WTC11 (cell line): ENCODE measurements at regions of chr1 and their contacts with region 1.

Region 1: GRCh38 chr1:205061665-205062069 is 18.7 kb downstream of the CNTN2 start:
- DNase-seq: peak; percentile 96
- ATAC-seq: peak; percentile 85
- H3K4me3 Mint-ChIP-seq: no peak overlapping the region
- H3K27ac Mint-ChIP-seq: no peak overlapping the region
- H3K4me1 Mint-ChIP-seq: peaks cover 9% of the 10 kb centered on the region; the same call in 1 of the 2 replicates
- H3K27me3 Mint-ChIP-seq: no peaks in the 10 kb centered on the region
- CTCF ChIP-seq: peak; percentile 84

Region 2: GRCh38 chr1:204692325-204692840 is 369.3 kb before region 1 on chr1:
- CTCF ChIA-PET with region 1: no interaction called
- POLR2A ChIA-PET with region 1: no interaction called
- DNase-seq: no peak
- ATAC-seq: peak; percentile 66
- H3K4me3 Mint-ChIP-seq: peak overlapping the region; percentile 28
- H3K27ac Mint-ChIP-seq: no peak overlapping the region
- H3K4me1 Mint-ChIP-seq: peaks cover 28% of the 10 kb centered on the region
- H3K27me3 Mint-ChIP-seq: peaks cover 56% of the 10 kb centered on the region
- CTCF ChIP-seq: no peak

Region 3: DNA sequence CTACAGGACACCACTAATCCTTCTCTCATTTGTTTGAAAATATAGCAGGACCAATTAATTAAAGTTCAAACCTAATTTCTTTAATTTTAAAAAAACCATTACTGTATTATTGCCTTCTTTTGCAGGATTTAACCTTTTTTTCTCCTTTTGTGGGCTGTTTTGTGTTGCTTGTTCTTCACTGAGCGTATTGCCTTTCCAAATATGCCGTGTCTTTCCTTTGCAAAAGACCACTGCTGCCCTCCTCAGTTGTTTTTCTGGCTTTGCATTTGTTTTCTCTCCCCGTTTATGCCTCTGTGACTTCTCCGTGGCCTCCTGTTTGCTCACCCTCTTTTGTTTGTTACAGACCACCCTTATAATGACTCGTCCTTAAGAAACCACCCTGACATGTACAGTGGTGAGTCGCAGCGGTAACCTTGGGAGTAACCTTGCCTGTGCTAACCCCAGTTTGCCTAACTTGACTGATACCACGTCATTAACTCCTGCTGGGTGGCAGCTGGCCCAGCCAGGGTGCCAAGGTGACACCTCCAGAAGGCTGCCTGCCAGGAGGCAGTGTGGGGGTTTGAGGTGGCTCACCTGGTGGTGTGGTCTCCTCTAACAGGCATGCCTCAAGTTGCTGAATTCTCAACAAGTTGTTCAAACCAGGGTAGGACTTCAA is 99.8 kb before region 1 on chr1:
- CTCF ChIA-PET with region 1: interaction called, 28 read pairs
- POLR2A ChIA-PET with region 1: no interaction called
- DNase-seq: no peak
- ATAC-seq: no peak; the same call in 1 of the 2 replicates
- H3K4me3 Mint-ChIP-seq: no peak overlapping the region
- H3K27ac Mint-ChIP-seq: no peak overlapping the region
- H3K4me1 Mint-ChIP-seq: peaks cover 9% of the 10 kb centered on the region
- H3K27me3 Mint-ChIP-seq: no peaks in the 10 kb centered on the region
- CTCF ChIP-seq: no peak

Region 4: DNA sequence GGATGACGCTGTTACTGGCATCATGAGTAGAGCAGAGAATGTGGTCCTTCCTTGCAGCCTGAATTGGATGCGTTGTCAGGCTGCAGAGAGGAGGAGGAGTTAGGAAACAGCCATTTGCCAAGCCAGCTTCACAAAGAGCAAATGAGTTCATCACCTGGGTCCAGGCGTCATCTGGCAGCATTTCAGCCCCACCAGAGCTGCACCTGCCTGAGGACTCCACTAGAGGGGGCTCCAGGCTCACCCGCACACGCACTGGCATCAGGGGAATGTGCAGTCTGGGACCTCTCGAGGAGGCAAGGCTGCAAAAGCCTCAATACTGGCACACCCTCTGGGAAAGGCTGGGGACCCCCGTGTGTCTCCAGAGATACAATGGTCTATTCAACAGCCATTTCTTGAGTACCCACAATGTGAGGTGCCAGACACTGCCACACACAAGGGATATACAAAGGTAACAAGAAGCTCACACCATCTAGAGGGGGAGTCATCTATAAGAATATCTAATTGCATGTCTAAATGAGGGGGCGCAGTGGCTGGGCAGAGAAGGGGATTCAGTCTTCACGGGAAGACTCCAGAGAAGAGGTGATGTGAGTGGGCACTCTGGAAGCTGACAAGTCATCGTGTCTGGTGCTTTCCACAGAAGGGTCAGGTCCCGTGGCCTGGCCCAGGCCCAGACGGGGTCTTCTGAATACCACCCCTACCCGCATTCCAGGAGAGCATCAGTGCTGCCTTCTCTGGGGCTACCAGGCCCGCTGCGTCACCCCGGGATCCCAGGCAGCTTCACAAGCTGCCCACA is 72.2 kb before region 1 on chr1:
- CTCF ChIA-PET with region 1: interaction called, 648 read pairs
- POLR2A ChIA-PET with region 1: interaction called, 8 read pairs
- DNase-seq: peak; percentile 85
- ATAC-seq: peak; percentile 87
- H3K4me3 Mint-ChIP-seq: no peak overlapping the region
- H3K27ac Mint-ChIP-seq: no peak overlapping the region
- H3K4me1 Mint-ChIP-seq: peaks cover 35% of the 10 kb centered on the region
- H3K27me3 Mint-ChIP-seq: peaks cover 20% of the 10 kb centered on the region
- CTCF ChIP-seq: peak; percentile 95

Region 5: DNA sequence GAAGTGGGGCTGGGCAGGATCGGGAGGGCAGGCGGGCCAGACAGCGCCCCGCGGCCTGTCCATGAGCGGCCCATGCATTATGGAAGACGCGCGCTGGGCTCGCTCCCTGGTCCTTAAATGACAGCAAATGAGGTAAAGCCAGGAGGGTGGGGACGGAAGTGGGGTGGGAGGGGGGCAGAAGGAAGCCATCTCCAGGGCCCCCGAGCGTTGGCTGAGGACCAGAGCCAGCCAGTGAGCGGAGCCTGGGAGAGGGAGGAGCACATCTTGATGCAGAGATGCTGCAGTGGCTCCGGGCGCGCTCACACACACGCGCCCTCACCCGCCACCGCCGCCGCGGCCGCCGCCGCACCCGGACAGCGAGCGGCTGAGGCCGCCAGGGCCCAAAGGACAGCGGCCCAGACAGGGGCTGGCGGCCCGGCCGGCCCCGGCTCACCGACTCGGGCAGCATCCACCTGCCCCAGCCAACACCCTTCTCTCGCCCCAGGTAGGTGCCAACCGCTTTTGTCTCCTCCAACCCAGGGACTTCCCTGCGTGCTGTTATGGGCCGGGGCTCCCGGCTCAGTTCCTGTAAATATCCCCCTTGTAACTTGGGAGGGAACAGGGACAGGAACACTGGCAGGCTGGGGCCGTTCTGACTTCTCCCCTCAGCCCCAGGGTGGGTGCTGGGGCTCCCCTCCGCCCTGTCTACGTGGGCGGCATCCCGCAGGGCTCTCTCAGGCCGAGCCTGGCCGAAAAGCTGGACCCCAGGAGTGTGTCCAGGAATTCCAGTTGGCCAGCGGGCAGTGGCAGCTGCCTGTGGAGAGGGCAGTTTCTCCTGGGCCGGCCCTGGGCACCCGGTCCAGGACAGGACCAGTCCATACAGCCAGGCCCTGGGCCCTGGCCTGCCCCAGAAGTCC is 18.5 kb before region 1 on chr1 and contains the start of gene CNTN2:
- CTCF ChIA-PET with region 1: interaction called, 90 read pairs
- POLR2A ChIA-PET with region 1: no interaction called
- DNase-seq: peak; percentile 46
- ATAC-seq: peak; percentile 76
- H3K4me3 Mint-ChIP-seq: peak within 1 kb of the TSS; percentile 30
- H3K27ac Mint-ChIP-seq: no peak within 1 kb of the TSS
- H3K4me1 Mint-ChIP-seq: peaks cover 33% of the 10 kb centered on the region
- H3K27me3 Mint-ChIP-seq: peaks cover 44% of the 10 kb centered on the region
- CTCF ChIP-seq: no peak
- total RNA-seq, gene CNTN2: 0.89 to 1.3 TPM (median 1.2 TPM) in 3 replicates

Region 6: DNA sequence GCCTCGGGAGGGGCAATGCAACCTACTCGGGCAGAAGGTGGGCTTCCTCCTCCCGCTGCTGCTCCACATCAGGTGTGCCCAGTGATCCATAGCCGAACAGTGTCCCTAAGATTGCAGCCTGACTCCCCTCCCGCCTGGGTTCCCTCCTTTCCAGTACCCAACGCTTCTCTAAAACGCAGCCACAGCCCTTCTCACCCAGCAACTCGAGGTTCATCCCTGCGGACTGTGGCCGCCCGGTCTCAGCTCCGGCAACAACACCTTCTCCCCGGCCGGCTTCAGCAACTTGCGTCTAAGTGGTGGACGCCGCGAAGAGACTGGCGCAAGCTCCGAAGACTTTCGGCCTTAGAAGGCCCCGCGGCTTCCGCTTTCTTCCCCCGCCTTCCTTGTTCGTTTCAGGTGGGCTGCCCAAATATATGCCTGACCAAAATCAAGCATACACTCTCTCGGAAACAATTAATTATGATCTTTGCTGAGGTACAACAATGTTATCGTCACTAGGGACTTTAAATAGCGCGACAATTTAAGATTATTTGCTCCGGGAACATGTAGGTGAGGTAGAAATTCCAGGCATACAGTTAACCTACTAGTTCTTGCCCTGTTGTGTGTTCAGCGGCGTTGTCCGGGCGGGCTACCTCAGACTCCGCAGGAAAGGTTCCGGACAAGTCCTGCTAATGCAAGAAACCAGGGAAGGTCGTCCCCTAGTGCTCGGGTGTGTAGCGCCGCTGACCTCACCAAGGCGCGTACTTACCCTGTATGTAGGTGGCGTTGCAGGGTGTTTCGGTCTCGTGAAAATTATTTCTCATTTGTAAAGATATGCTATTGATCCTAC is 60.2 kb after region 1 on chr1 and contains the start of gene RBBP5:
- CTCF ChIA-PET with region 1: interaction called, 15 read pairs
- POLR2A ChIA-PET with region 1: no interaction called
- DNase-seq: peak; percentile 96
- ATAC-seq: peak; percentile 100
- H3K4me3 Mint-ChIP-seq: peak within 1 kb of the TSS; percentile 98
- H3K27ac Mint-ChIP-seq: peak within 1 kb of the TSS; percentile 100
- H3K4me1 Mint-ChIP-seq: peaks cover 18% of the 10 kb centered on the region
- H3K27me3 Mint-ChIP-seq: no peaks in the 10 kb centered on the region; the same call in 1 of the 2 replicates
- CTCF ChIP-seq: no peak
- total RNA-seq, gene RBBP5: 18.5 to 23.8 TPM (median 20.1 TPM) in 3 replicates

Region 7: DNA sequence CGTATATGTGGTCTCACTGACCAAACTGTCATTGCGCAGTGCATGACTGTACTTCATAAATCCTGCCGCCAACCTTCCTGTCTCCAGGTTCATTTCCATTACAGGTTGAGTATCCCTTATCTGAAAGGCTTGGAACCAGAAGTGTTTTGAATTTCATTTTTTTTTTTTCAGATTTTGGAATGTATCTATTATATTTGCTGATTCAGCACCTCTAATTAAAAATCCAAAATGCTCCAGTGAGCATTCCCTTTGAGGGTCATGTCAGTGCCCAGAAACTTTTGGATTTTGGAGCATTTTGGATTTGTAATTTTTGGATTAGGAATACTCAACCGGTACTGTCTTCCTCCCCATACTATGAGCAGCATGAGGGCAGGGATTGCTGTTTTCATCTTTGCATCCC is 90.8 kb after region 1 on chr1:
- CTCF ChIA-PET with region 1: no interaction called
- POLR2A ChIA-PET with region 1: no interaction called
- DNase-seq: no peak
- ATAC-seq: no peak
- H3K4me3 Mint-ChIP-seq: no peak overlapping the region
- H3K27ac Mint-ChIP-seq: no peak overlapping the region
- H3K4me1 Mint-ChIP-seq: no peaks in the 10 kb centered on the region
- H3K27me3 Mint-ChIP-seq: no peaks in the 10 kb centered on the region
- CTCF ChIP-seq: no peak

Region 8: GRCh38 chr1:205227584-205228006 is 165.9 kb after region 1 on chr1 and contains the start of gene TMCC2:
- CTCF ChIA-PET with region 1: interaction called, 19 read pairs
- POLR2A ChIA-PET with region 1: interaction called, 3 read pairs
- DNase-seq: peak; percentile 97
- ATAC-seq: peak; percentile 96
- H3K4me3 Mint-ChIP-seq: peak within 1 kb of the TSS; percentile 82
- H3K27ac Mint-ChIP-seq: peak within 1 kb of the TSS; percentile 95
- H3K4me1 Mint-ChIP-seq: peaks cover 34% of the 10 kb centered on the region
- H3K27me3 Mint-ChIP-seq: peaks cover 15% of the 10 kb centered on the region
- CTCF ChIP-seq: no peak
- total RNA-seq, gene TMCC2: 9.5 to 11.2 TPM (median 11.2 TPM) in 3 replicates